ENCODE measurements at regions of chr14 and their contacts with region 1.

Region 1: GRCh38 chr14:49828640-49829039 is 23.9 kb downstream of the NEMF start:
- DNase-seq: no peak
- ATAC-seq: no peak
- H3K4me3 ChIP-seq: no peak overlapping the region
- H3K4me3 Mint-ChIP-seq: no peak overlapping the region
- H3K27ac ChIP-seq: no peak overlapping the region
- H3K27ac Mint-ChIP-seq: no peak overlapping the region
- H3K4me1 ChIP-seq: no peaks in the 10 kb centered on the region
- H3K4me1 Mint-ChIP-seq: peaks cover 3% of the 10 kb centered on the region
- H3K27me3 ChIP-seq: no peaks in the 10 kb centered on the region
- H3K27me3 Mint-ChIP-seq: no peaks in the 10 kb centered on the region
- CTCF ChIP-seq: no peak

Region 2: GRCh38 chr14:49783394-49784010 is 45.1 kb before region 1 on chr14:
- CTCF ChIA-PET with region 1: no interaction called
- POLR2A ChIA-PET with region 1: interaction called, 4 read pairs
- intact Hi-C with region 1: loop called (anchors 5 kb)
- DNase-seq: no peak
- ATAC-seq: no peak
- H3K4me3 ChIP-seq: no peak overlapping the region
- H3K4me3 Mint-ChIP-seq: no peak overlapping the region
- H3K27ac ChIP-seq: no peak overlapping the region
- H3K27ac Mint-ChIP-seq: no peak overlapping the region
- H3K4me1 ChIP-seq: no peaks in the 10 kb centered on the region
- H3K4me1 Mint-ChIP-seq: peaks cover 2% of the 10 kb centered on the region
- H3K27me3 ChIP-seq: no peaks in the 10 kb centered on the region
- H3K27me3 Mint-ChIP-seq: no peaks in the 10 kb centered on the region
- CTCF ChIP-seq: no peak